Cardiac septum (tissue), 1 donor: ENCODE measurements at regions of chr11 and their contacts with region 1.

Region 1: DNA sequence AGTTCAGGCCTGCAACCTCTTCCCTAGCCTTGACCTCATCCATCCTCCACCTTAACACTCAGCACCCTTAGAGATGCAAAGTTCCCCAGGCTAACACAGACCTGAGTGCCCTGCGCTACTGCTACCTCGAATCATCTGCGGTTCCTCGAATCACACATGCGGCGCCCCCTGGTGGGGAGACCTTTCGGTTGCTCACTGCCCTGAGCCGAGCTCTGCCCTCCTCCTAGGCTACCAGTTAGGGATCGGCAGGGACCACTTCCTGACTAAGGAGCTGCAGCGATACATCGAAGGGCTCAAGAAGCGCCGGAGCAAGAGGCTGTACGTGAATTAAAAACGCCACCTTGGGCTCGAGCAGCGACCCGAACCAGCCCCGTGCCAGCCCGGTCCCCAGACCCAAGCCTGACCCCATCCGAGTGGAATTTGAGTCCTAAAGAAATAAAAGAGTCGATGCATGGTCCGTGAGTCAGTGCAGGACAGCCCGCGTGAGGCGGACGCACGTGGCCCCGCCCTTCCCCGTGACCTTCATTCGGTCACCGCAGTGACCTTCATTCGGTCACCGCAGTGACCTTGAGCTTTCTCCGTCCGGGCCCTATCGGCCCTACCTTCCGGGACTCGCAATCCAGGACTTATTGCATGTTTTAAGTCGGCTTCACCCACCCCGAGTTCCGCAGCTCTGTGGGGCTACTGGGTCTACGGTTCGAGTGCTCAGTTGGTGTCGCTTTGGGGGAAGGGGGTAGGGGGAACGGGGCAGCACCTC is 830 bp upstream of the ESRRA start:
- DNase-seq: peak; percentile 96

Region 2: GRCh38 chr11:64204464-64204989 is 100.0 kb before region 1 on chr11:
- intact Hi-C with region 1: loop called (anchors 2 kb)
- DNase-seq: peak; percentile 93

Region 3: DNA sequence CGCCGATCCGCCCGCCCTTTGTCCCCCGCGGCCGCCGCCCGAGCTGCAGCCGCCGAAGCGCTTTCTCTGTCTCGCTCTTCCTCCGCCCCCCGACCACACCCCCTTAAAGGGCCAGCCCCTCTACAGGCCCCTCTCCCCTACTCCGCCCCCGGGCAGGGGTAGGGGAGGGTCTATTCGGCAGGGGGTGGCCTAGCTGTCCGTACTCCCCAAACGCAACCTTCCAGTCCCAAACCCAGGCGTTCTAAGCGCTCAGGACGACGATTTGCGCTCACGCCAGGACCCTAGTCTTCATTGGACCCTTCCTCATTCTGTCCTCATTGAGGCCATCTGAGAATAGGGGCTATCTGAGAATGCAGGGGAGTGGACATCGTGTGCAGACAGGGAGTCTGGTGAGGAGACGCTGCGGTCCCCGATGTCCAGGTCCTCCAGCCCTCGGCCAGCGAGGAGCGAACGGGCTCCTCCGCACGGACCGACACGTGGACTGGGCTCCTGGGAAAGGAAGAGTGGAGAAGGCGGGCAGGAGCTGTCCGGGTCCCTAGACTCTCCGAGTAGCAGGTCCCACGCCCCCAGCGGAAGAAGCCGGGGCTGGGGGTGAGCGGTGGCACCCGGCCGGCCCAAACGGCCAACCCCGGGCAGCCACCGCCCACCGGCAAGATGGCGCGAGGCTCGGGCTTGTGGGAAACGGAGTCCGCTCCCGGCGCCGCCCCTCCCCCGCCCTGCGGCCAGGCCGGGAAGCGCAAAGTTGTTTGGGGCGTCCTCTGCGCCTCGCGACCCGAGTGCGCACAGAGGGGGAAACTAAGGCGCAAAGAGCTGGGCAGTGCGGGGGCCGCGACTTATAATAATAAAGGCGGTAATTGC is 57.4 kb before region 1 on chr11 and contains the start of gene PPP1R14B:
- intact Hi-C with region 1: loop called (anchors 5 kb)
- DNase-seq: peak; percentile 92
- total RNA-seq, gene PPP1R14B: 113 TPM

Region 4: GRCh38 chr11:64284048-64284961 is 20.2 kb before region 1 on chr11 and contains the start of gene BAD:
- intact Hi-C with region 1: loop called (anchors 2 kb)
- DNase-seq: peak; percentile 98
- total RNA-seq, gene BAD: 45.9 TPM

Region 5: DNA sequence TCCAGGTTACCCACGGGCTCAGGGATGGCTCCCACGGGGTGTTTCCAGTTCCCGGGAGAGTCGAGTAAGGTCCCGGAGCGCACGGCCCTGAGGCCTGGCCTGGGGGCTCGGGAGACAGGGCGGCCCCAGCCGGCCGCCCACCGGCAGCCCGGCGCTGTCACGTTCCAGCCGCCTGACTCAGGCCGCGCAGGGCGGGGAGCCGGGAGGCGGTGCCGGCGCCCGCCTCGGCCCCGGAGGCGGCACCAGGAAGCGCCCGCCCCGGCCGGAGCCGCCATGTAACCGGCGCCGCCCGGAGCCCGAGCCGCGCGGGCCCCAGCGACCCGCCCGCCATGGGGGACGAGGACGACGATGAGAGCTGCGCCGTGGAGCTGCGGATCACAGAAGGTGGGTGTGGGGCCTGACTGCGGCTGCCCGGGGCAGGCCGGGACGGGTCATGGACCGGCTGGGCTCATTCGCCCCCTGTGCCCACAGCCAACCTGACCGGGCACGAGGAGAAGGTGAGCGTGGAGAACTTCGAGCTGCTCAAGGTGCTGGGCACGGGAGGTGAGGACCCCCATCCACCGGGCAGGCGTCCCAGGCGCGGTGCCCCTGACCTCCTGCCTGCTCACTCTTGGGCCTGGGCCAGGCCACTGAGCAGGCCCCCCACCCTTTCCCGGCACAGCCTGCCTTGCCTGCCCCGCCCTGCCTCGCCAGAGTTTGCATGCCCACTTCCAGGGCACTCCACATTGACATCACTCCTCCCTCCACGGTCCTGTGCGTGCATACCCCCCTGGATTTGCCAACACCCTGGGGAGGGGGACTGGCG is 54.6 kb after region 1 on chr11 and contains the start of gene RPS6KA4:
- intact Hi-C with region 1: no loop called
- DNase-seq: peak; percentile 84
- total RNA-seq, gene RPS6KA4: 15.4 TPM